ENCODE measurements at regions of chr3 and their contacts with region 1.

Region 1: GRCh38 chr3:130892759-130893375 is 1.0 kb upstream of the ATP2C1 start:
- DNase-seq: peak; percentile 71 to 89 (median 82)
- H3K4me3 ChIP-seq: peak overlapping the region; percentile 44 to 99 (median 80)
- H3K27ac ChIP-seq: peak overlapping the region; percentile 93 to 99 (median 96)
- H3K4me1 ChIP-seq: peaks cover 10 to 22% of the 10 kb centered on the region in 2 donors
- H3K27me3 ChIP-seq: no peaks in the 10 kb centered on the region
- CTCF ChIP-seq: peak; percentile 76 to 96 (median 90)
- POLR2A ChIP-seq: no peak

Region 2: DNA sequence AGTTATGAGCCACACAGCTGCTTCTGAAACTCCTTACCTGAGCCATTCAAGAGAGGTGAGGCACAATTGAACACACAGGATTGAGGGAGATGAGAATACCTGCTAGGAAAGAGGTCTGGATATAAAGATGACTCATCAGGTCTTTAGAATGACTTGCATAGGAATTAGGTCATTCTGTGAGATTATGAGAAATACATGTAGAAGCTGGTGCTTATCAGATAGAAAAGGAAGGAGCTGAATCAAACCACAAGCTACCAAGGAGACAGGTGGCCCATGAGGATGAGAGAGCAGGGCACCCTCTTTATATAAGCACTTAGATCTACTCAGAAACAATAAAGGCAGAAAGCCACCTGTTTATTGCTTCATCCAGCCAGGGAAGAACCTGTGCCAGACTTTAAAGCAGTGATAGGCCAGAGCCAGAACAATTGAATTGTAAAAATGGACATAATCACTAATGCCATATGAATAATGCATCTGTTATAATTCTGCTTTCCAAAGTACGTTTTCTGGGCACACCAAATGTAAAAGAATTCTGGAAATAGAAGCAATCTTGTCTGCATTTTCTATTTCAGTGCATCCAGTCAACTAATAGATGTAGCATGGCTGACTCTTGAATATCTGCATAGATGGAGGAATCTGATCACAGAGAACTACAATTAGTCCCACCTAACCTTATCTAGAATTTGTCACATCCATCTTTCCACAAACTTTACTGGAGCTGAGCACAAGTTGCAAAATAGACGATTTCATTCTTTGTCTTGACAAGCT is 221.1 kb before region 1 on chr3:
- intact Hi-C with region 1: no loop called
- DNase-seq: no peak
- H3K4me3 ChIP-seq: no peak overlapping the region
- H3K27ac ChIP-seq: no peak overlapping the region
- H3K4me1 ChIP-seq: no peaks in the 10 kb centered on the region
- H3K27me3 ChIP-seq: no peaks in the 10 kb centered on the region
- CTCF ChIP-seq: no peak
- POLR2A ChIP-seq: no peak

Region 3: DNA sequence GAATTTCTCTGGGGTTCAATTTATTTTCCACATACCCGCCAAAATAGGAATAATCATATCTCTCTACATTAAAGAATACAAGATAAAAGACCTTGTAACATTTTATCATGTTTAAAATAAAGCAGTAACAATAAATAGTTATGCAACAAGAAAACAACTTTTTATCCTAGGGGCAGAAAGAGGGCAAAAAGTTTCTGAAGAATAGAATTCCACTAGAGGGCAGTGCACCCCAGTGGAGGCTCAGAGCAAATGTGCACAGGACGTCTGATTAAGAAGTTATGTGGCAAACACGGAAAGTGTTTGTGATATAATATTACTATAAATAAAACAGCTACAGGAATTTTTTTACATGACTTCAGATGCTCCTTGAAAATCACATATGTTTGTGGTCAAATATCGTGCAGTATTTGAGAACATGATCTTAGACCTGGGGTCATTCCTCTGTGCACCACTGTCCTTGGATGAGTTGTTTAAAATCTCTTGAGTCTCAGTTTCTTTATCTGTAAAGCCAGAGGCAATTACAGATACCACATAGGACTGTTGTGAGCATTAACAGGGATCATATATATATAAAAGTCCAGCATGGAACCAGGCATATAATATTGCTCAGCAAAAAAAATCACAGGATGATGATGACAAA is 133.0 kb before region 1 on chr3:
- intact Hi-C with region 1: loop called (anchors 5 kb)
- DNase-seq: peak; percentile 59 to 79 (median 66)
- H3K4me3 ChIP-seq: no peak overlapping the region
- H3K27ac ChIP-seq: no peak overlapping the region
- H3K4me1 ChIP-seq: no peaks in the 10 kb centered on the region
- H3K27me3 ChIP-seq: no peaks in the 10 kb centered on the region
- CTCF ChIP-seq: peak; percentile 67 to 93 (median 83)
- POLR2A ChIP-seq: no peak

Measured in adrenal gland (tissue), 19 donors.